WTC11 (cell line): ENCODE measurements at regions of chr5 and their contacts with region 1.

Region 1: DNA sequence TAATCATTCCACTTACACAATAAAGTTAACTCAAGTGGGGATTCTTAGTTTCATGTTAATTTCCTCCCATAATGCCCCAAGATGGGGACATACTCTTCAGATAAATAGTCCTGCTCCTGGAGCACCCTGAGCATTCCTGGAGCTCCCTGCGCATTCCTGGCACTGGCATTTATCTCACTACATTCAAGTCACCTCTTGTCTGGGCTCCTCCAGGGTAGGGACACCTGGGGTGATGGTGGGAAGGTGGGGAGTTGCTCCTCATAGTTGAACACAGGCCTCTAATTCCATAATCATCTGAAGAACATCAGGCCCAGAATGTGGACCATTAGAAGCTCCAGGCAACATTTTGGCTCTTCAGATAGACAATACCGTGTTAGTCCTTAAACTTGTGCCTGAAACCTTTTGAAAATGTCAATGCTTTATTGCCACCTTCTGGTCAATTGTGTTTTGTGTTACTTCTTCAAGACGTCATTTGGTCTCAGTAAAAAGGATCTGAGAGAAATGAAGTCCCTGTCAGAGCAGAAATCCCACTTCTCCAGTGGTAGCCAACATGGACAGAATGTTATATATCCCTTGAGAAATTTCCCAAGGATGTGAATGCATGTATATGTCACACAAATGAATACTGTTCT is 14.2 kb upstream of the AGGF1 start:
- DNase-seq: no peak
- ATAC-seq: peak; percentile 59
- H3K4me3 Mint-ChIP-seq: no peak overlapping the region
- H3K27ac Mint-ChIP-seq: no peak overlapping the region
- H3K4me1 Mint-ChIP-seq: peaks cover 4% of the 10 kb centered on the region
- H3K27me3 Mint-ChIP-seq: no peaks in the 10 kb centered on the region
- CTCF ChIP-seq: no peak

Region 2: DNA sequence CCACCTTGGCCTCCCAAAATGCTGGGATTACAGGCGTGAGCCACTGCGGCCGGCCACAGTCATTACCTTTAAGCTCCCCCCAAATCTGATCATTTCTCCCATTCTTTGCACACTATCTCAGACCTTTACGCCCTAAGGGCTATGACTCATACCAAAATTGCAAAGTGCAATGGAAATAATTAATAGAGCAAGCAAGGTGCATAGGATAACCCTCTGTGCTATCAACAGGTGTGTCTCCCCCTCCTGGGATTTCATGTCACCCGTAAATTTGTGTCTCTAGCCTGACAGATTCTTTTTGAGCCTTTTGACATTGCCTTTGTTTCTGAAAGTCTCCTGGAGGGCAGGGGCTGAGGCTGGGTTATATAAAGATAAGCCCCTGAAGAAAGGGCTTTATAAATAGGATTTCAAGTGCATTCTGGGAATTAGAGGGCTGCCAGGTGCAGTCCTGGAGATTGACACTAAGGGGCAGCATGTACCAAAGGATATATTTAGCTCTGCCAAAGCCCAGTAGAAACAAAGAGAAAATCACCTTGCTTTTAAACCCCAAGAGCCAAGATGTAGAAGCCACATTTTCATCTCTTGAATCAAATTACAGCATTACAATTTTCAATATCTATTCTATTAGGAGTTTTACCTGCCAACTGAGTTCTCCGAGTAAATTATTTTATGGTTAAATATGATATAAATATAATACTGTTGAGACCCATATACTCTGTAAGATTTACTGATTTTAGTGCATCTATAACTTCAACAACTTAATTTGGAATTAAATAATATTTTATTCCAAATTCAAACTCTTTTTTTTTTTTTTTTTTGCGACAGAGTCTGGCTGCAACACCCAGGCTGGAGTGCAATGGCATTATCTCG is 148.0 kb before region 1 on chr5:
- CTCF ChIA-PET with region 1: interaction called, 24 read pairs
- POLR2A ChIA-PET with region 1: no interaction called
- DNase-seq: peak; percentile 72
- ATAC-seq: peak; percentile 87
- H3K4me3 Mint-ChIP-seq: no peak overlapping the region
- H3K27ac Mint-ChIP-seq: no peak overlapping the region
- H3K4me1 Mint-ChIP-seq: peaks cover 18% of the 10 kb centered on the region
- H3K27me3 Mint-ChIP-seq: no peaks in the 10 kb centered on the region
- CTCF ChIP-seq: peak; percentile 76

Region 3: DNA sequence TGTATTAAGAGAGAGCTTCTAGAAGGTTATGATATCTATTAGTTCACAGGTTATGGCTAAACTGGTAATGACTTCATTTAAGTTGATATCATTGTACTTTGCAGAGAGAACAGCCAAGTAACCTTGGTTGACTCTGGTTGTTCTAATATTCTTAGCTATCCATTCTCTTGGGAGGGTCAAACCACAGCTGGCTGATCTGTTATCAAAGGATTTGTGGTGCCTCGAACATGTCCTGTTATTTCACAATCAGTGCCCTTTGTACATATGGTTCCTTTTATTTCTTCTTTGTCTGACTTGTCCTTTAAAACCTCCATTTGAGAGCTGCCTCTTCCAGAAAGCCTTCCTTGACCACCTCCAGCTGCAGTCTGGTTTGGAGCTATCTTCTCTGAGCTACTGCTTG is 256.2 kb after region 1 on chr5:
- CTCF ChIA-PET with region 1: no interaction called
- POLR2A ChIA-PET with region 1: no interaction called
- DNase-seq: no peak
- ATAC-seq: no peak
- H3K4me3 Mint-ChIP-seq: no peak overlapping the region
- H3K27ac Mint-ChIP-seq: no peak overlapping the region
- H3K4me1 Mint-ChIP-seq: peaks cover 3% of the 10 kb centered on the region
- H3K27me3 Mint-ChIP-seq: no peaks in the 10 kb centered on the region
- CTCF ChIP-seq: no peak